CD4-positive, alpha-beta T cell (primary cell): ENCODE measurements at regions of chr1 and their contacts with region 1.

Region 1: DNA sequence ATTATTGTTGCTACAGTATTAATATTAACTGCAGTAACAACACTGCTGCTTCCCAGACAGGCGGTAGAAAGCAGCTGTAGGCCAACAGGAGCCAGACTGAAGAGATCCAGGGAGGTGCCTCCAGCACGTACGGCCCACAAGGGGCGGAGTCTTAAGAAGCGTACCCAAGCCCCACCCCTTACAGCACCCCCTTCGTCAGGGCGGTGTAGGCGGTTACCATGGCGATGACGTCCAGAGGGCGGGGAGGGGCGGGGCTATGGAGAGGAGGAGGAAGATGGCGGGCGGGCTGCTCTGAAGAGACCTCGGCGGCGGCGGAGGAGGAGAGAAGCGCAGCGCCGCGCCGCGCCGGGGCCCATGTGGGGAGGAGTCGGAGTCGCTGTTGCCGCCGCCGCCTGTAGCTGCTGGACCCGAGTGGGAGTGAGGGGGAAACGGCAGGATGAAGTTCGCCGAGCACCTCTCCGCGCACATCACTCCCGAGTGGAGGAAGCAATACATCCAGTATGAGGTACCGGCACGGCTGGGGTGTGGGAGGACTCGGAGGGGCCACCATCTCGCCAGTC is at the start of gene XPR1:
- DNase-seq: peak; percentile 96 to 100 (median 98)
- ATAC-seq: peak; percentile 95
- H3K4me3 ChIP-seq: peak within 1 kb of the TSS; percentile 89
- H3K4me3 Mint-ChIP-seq: peak within 1 kb of the TSS; percentile 91
- H3K27ac ChIP-seq: peak within 1 kb of the TSS; percentile 81 to 94
- H3K27ac Mint-ChIP-seq: no peak within 1 kb of the TSS
- H3K4me1 ChIP-seq: peaks cover 7% of the 10 kb centered on the region
- H3K4me1 Mint-ChIP-seq: peaks cover 17% of the 10 kb centered on the region
- H3K27me3 ChIP-seq: no peaks in the 10 kb centered on the region
- H3K27me3 Mint-ChIP-seq: no peaks in the 10 kb centered on the region
- CTCF ChIP-seq: no peak
- total RNA-seq, gene XPR1: 13.7 TPM

Region 2: DNA sequence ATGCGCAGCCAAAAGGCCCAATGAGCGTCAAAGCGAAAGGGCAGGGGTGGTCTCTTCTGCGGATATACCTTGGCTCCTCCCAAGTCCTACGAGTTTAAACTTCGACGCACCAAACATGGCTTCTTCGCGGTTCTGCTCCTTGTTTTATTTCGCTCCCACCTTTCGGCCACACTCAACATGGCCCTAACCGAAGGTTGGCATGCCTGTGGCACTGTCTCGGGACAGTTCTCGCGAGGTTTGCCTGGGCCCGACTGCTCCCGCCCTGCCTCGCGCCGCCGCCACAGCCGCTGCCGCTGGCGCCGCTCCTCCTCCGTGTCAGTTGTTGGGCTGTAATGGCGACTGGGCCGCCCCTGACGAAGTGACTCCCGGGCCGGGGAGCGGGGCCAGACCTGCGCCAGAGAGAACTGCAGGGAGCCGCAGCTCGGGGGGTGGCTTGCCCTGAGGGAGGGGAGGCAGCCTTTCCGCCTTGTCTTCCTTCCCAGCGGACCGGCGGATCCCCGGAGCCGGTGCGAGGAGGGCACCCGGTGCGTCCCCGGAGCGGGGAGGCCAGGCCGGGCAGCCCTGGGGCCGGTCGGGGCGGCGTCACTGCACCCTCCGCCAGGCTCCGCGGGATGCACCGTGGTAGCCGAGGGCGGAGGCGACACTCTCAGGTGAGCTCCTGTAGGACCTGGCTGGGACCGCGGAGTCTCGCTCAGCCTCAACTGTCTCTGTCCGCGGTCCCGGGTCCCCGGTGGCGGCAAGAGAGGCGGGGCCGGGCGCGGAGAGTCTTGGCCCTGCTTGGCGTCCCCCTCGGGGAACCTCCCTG is 677.2 kb before region 1 on chr1 and contains the start of gene CEP350:
- CTCF ChIA-PET with region 1: no interaction called
- POLR2A ChIA-PET with region 1: no interaction called
- intact Hi-C with region 1: loop called in 1 of 2 experiments (anchors 10 kb)
- DNase-seq: peak; percentile 95 to 100 (median 97)
- ATAC-seq: peak; percentile 84
- H3K4me3 ChIP-seq: peak within 1 kb of the TSS; percentile 87
- H3K4me3 Mint-ChIP-seq: peak within 1 kb of the TSS; percentile 96
- H3K27ac ChIP-seq: peak within 1 kb of the TSS; percentile 82 to 90
- H3K27ac Mint-ChIP-seq: peak within 1 kb of the TSS; percentile 94
- H3K4me1 ChIP-seq: peaks cover 23% of the 10 kb centered on the region
- H3K4me1 Mint-ChIP-seq: peaks cover 71% of the 10 kb centered on the region
- H3K27me3 ChIP-seq: no peaks in the 10 kb centered on the region
- H3K27me3 Mint-ChIP-seq: no peaks in the 10 kb centered on the region
- CTCF ChIP-seq: no peak
- total RNA-seq, gene CEP350: 45.5 to 51.4 TPM

Region 3: DNA sequence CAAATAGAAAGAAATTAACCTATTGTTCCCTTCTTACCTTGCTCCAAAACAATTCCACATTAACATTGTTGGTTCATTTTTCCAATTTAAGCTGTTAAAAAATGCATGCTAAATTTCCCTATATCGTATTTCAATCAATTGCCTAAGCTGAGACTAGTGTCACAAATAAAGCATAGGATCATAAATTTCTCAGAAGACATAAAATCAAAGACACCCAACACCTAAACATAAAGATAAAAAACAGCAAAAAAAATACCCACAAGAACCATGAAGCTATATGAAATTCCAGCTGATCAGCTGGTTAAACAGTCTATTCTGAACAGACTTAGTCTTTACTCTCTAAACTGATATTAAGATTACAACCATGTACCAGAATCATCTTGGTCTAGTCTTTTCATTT is 161.8 kb before region 1 on chr1:
- CTCF ChIA-PET with region 1: no interaction called
- POLR2A ChIA-PET with region 1: no interaction called
- intact Hi-C with region 1: no loop called
- DNase-seq: no peak
- ATAC-seq: no peak
- H3K4me3 ChIP-seq: no peak overlapping the region
- H3K4me3 Mint-ChIP-seq: no peak overlapping the region
- H3K27ac ChIP-seq: no peak overlapping the region
- H3K27ac Mint-ChIP-seq: no peak overlapping the region
- H3K4me1 ChIP-seq: no peaks in the 10 kb centered on the region
- H3K4me1 Mint-ChIP-seq: peaks cover 43% of the 10 kb centered on the region
- H3K27me3 ChIP-seq: no peaks in the 10 kb centered on the region
- H3K27me3 Mint-ChIP-seq: no peaks in the 10 kb centered on the region
- CTCF ChIP-seq: no peak

Region 4: DNA sequence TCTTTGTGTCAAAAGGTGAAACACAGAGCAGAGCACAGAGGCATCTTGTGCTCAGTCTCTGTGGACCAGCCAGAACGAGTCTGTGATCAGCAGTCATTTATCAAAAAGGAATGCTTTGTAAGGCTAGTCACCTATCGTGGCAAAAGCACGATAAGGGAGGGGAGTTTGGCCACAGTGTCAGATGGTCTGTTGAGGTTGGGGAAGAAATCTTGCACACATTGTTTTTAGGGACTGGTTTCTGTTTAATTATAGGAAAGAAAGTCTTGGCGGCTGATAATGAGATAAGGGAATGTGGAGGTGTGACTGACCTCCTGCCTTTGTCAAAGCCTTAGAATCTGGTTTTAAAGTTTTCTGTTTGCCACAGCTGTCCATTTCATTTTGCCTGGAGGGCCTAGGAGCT is 222.6 kb after region 1 on chr1:
- CTCF ChIA-PET with region 1: no interaction called
- POLR2A ChIA-PET with region 1: no interaction called
- intact Hi-C with region 1: loop called in 1 of 2 experiments (anchors 2 kb)
- DNase-seq: no peak
- ATAC-seq: no peak
- H3K4me3 ChIP-seq: no peak overlapping the region
- H3K4me3 Mint-ChIP-seq: no peak overlapping the region
- H3K27ac ChIP-seq: no peak overlapping the region
- H3K27ac Mint-ChIP-seq: no peak overlapping the region
- H3K4me1 ChIP-seq: no peaks in the 10 kb centered on the region
- H3K4me1 Mint-ChIP-seq: peaks cover 32% of the 10 kb centered on the region
- H3K27me3 ChIP-seq: no peaks in the 10 kb centered on the region
- H3K27me3 Mint-ChIP-seq: no peaks in the 10 kb centered on the region
- CTCF ChIP-seq: no peak

Region 5: DNA sequence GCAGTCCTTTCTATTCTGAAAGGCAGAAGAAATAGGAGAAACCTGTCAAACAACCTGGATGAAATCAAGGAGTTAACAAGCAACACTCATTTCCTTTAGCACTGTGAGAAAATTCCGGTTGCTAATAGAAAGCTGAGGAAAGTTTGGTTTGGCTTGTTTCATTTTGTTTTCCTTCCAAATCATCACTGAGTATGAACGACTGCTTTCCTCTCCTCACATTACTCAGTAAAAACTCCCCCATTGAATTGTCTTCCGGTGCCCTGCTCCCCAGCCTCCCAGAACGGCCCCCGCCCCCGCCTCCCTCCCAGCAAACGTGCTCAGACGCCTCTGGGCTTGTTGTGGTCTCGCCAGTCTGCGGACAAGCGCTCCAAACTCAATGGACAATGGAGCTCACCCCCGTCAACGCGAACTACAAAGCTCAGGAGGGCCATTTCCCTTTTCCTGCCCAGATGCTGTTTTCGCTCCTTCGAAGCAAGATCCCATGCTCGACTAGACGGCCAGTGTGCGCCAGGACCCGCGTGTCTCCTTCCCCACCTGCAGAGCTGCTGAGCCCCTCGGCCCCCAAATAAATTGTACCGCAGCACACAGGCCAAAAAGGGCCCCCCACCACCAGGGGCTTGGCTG is 390.1 kb after region 1 on chr1:
- CTCF ChIA-PET with region 1: no interaction called
- POLR2A ChIA-PET with region 1: no interaction called
- intact Hi-C with region 1: loop called in 1 of 2 experiments (anchors 5 kb)
- DNase-seq: peak in 13 of 14 experiments; percentile 22 to 80 (median 44)
- ATAC-seq: peak; percentile 40
- H3K4me3 ChIP-seq: peak overlapping the region; percentile 76
- H3K4me3 Mint-ChIP-seq: peak overlapping the region; percentile 99
- H3K27ac ChIP-seq: peak overlapping the region; percentile 53 to 83
- H3K27ac Mint-ChIP-seq: peak overlapping the region; percentile 98
- H3K4me1 ChIP-seq: peaks cover 26% of the 10 kb centered on the region
- H3K4me1 Mint-ChIP-seq: peaks cover 47% of the 10 kb centered on the region
- H3K27me3 ChIP-seq: no peaks in the 10 kb centered on the region
- H3K27me3 Mint-ChIP-seq: peaks cover 12% of the 10 kb centered on the region
- CTCF ChIP-seq: no peak

Region 6: GRCh38 chr1:181142096-181142958 is 510.5 kb after region 1 on chr1:
- CTCF ChIA-PET with region 1: no interaction called
- POLR2A ChIA-PET with region 1: no interaction called
- intact Hi-C with region 1: loop called in 1 of 2 experiments (anchors 10 kb)
- DNase-seq: peak; percentile 74 to 92 (median 86)
- ATAC-seq: peak; percentile 100
- H3K4me3 ChIP-seq: no peak overlapping the region
- H3K4me3 Mint-ChIP-seq: no peak overlapping the region
- H3K27ac ChIP-seq: no peak overlapping the region
- H3K27ac Mint-ChIP-seq: no peak overlapping the region
- H3K4me1 ChIP-seq: peaks cover 31% of the 10 kb centered on the region
- H3K4me1 Mint-ChIP-seq: peaks cover 36% of the 10 kb centered on the region
- H3K27me3 ChIP-seq: no peaks in the 10 kb centered on the region
- H3K27me3 Mint-ChIP-seq: no peaks in the 10 kb centered on the region
- CTCF ChIP-seq: peak; percentile 97

Region 7: GRCh38 chr1:182588500-182589452 is 1956.9 kb after region 1 on chr1 and contains the start of gene RNASEL:
- CTCF ChIA-PET with region 1: no interaction called
- POLR2A ChIA-PET with region 1: no interaction called
- intact Hi-C with region 1: loop called in 1 of 2 experiments (anchors 10 kb)
- DNase-seq: peak; percentile 28 to 85 (median 54)
- ATAC-seq: peak; percentile 85
- H3K4me3 ChIP-seq: peak within 1 kb of the TSS; percentile 83
- H3K4me3 Mint-ChIP-seq: peak within 1 kb of the TSS; percentile 95
- H3K27ac ChIP-seq: peak within 1 kb of the TSS; percentile 89 to 97
- H3K27ac Mint-ChIP-seq: peak within 1 kb of the TSS; percentile 99
- H3K4me1 ChIP-seq: peaks cover 28% of the 10 kb centered on the region
- H3K4me1 Mint-ChIP-seq: peaks cover 52% of the 10 kb centered on the region
- H3K27me3 ChIP-seq: no peaks in the 10 kb centered on the region
- H3K27me3 Mint-ChIP-seq: no peaks in the 10 kb centered on the region
- CTCF ChIP-seq: no peak
- total RNA-seq, gene RNASEL: 3.5 to 3.7 TPM